ENCODE measurements at regions of chr2 and their contacts with region 1.

Region 1: DNA sequence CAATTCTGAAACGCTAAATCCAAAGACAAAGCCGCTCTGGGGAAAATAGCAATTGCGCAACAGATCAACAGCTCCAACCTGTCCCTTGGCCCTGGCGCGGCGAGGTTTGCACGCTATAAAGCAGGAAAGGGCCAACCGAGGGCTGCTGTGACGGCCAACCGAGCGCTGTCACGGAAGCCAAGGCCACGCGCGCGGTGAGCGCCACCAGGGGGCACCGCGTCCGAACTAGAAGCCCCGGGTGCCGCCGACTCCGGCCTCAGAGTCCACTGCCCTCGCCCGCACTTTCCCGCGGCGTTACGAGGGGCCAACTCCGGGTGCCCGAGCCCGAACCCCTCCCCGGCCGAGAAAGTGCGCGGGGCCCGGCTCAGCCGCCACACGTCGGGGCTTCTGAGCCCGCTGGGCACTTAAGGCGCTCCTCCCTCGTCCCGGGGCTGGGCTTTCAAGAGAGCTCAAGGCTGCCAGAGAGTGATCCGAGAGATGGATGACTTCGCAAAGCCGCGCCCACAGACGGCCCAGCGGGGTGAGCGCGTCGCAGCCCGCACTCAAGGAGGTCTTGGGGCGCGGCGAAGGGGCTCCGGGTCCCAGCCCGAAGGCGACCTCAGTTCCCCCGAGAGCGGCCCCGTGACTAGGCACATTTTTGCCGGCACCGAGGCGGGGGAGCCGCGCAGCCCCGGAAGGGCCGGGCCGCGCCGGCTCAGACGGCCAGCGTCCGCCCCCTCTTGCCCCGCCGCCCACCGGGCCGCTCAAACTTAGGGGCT is 897 bp downstream of the NFE2L2 start:
- DNase-seq: peak; percentile 94 to 98 (median 96)
- H3K4me3 ChIP-seq: peak overlapping the region; percentile 65 to 97 (median 88)
- H3K27ac ChIP-seq: peak overlapping the region; percentile 89 to 100 (median 99)
- H3K27me3 ChIP-seq: no peaks in the 10 kb centered on the region
- CTCF ChIP-seq: peak; percentile 67 to 93 (median 83)

Region 2: GRCh38 chr2:177212106-177212890 is 51.3 kb before region 1 on chr2 and contains the start of gene HNRNPA3:
- intact Hi-C with region 1: loop called (anchors 1 kb)
- DNase-seq: peak; percentile 98 to 100 (median 99)
- H3K4me3 ChIP-seq: peak within 1 kb of the TSS; percentile 69 to 95 (median 86)
- H3K27ac ChIP-seq: peak within 1 kb of the TSS; percentile 95 to 100 (median 99)
- H3K27me3 ChIP-seq: no peaks in the 10 kb centered on the region
- CTCF ChIP-seq: peak in 53 of 56 donors; percentile 9 to 69 (median 49)
- total RNA-seq, gene HNRNPA3: 105 to 187 (median 137) TPM

Region 3: GRCh38 chr2:177229448-177230242 is 34.0 kb before region 1 on chr2:
- intact Hi-C with region 1: loop called in 1 of 2 experiments (anchors 5 kb)
- DNase-seq: no peak
- H3K4me3 ChIP-seq: no peak overlapping the region
- H3K27ac ChIP-seq: peak overlapping the region in 45 of 59 donors; percentile 4 to 97 (median 50)
- H3K27me3 ChIP-seq: no peaks in the 10 kb centered on the region
- CTCF ChIP-seq: no peak

Region 4: GRCh38 chr2:177419274-177419673 is 155.6 kb after region 1 on chr2:
- intact Hi-C with region 1: loop called in 1 of 2 experiments (anchors 10 kb)
- DNase-seq: no peak
- H3K4me3 ChIP-seq: no peak overlapping the region
- H3K27ac ChIP-seq: no peak overlapping the region
- H3K27me3 ChIP-seq: no peaks in the 10 kb centered on the region
- CTCF ChIP-seq: no peak

Measured in dorsolateral prefrontal cortex (tissue), 120 donors.